B cell (primary cell): ENCODE measurements at regions of chr15 and their contacts with region 1.

Region 1: GRCh38 chr15:38683382-38684242 is 119.0 kb upstream of the RASGRP1 start:
- DNase-seq: peak; percentile 82
- ATAC-seq: peak; percentile 84
- H3K4me3 ChIP-seq: no peak overlapping the region
- H3K4me3 Mint-ChIP-seq: peak overlapping the region; percentile 50
- H3K27ac ChIP-seq: peak overlapping the region in 1 of 2 donors; percentile 75
- H3K27ac Mint-ChIP-seq: peak overlapping the region; percentile 64
- H3K4me1 ChIP-seq: peaks cover 20 to 24% of the 10 kb centered on the region in 2 donors
- H3K4me1 Mint-ChIP-seq: peaks cover 24% of the 10 kb centered on the region
- H3K27me3 ChIP-seq: no peaks in the 10 kb centered on the region
- H3K27me3 Mint-ChIP-seq: no peaks in the 10 kb centered on the region
- CTCF ChIP-seq: peak; percentile 93

Region 2: GRCh38 chr15:38453971-38454695 is 229.5 kb before region 1 on chr15 and contains the start of gene FAM98B:
- CTCF ChIA-PET with region 1: interaction called, 50 read pairs
- POLR2A ChIA-PET with region 1: interaction called, 3 read pairs
- intact Hi-C with region 1: no loop called
- DNase-seq: peak; percentile 91
- ATAC-seq: peak; percentile 86
- H3K4me3 ChIP-seq: peak within 1 kb of the TSS; percentile 69 to 94 (median 86)
- H3K4me3 Mint-ChIP-seq: peak within 1 kb of the TSS; percentile 99
- H3K27ac ChIP-seq: peak within 1 kb of the TSS; percentile 87 to 89
- H3K27ac Mint-ChIP-seq: peak within 1 kb of the TSS; percentile 97
- H3K4me1 ChIP-seq: peaks cover 9% of the 10 kb centered on the region in 2 donors
- H3K4me1 Mint-ChIP-seq: peaks cover 27% of the 10 kb centered on the region
- H3K27me3 ChIP-seq: no peaks in the 10 kb centered on the region
- H3K27me3 Mint-ChIP-seq: peaks cover 10% of the 10 kb centered on the region
- CTCF ChIP-seq: peak; percentile 12
- total RNA-seq, gene FAM98B: 16.6 and 21.5 TPM in 2 replicates

Region 3: DNA sequence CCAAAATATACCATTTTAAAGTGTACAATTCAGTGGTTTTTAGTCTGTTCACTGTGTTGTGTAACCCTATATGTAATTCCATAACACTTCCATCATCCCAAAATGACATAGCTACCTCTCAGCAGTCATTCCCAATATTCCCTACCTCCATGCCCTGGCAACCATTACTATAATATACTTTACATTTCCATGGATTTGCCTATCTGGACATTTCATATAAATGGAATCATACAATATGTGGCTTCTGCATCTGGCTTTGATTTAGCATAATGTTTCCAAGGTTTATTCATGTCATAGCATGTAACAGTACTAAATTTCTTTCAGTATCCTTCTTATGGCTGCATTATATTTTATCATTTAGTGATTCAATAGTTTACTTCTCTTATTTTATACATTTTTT is 204.3 kb before region 1 on chr15:
- CTCF ChIA-PET with region 1: interaction called, 145 read pairs
- POLR2A ChIA-PET with region 1: no interaction called
- intact Hi-C with region 1: loop called (anchors 1 kb)
- DNase-seq: no peak
- ATAC-seq: no peak
- H3K4me3 ChIP-seq: no peak overlapping the region
- H3K4me3 Mint-ChIP-seq: no peak overlapping the region
- H3K27ac ChIP-seq: no peak overlapping the region
- H3K27ac Mint-ChIP-seq: no peak overlapping the region
- H3K4me1 ChIP-seq: no peaks in the 10 kb centered on the region
- H3K4me1 Mint-ChIP-seq: peaks cover 9% of the 10 kb centered on the region
- H3K27me3 ChIP-seq: no peaks in the 10 kb centered on the region
- H3K27me3 Mint-ChIP-seq: no peaks in the 10 kb centered on the region
- CTCF ChIP-seq: no peak

Region 4: DNA sequence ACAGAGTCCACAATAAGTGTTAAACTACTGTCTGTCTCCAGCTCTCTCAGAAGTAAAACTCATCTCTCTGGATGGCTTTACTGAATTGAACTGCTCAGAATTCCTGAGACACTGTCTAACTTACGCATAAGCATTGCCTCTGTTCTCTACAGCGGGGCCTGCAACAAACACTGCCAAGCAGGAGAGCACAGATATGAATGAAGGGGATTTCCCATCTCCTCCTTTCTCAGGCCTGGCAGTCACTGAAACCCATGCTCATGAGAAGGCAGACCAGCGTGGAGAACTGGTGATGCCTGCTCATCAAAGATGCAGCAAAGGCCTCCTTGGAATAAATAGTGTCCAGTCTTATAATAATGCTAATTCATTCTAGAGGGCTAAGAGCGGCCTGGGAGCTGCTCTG is 129.3 kb before region 1 on chr15:
- CTCF ChIA-PET with region 1: interaction called, 546 read pairs
- POLR2A ChIA-PET with region 1: no interaction called
- intact Hi-C with region 1: no loop called
- DNase-seq: no peak
- ATAC-seq: no peak
- H3K4me3 ChIP-seq: no peak overlapping the region
- H3K4me3 Mint-ChIP-seq: no peak overlapping the region
- H3K27ac ChIP-seq: no peak overlapping the region
- H3K27ac Mint-ChIP-seq: no peak overlapping the region
- H3K4me1 ChIP-seq: peaks cover 35 to 40% of the 10 kb centered on the region in 2 donors
- H3K4me1 Mint-ChIP-seq: peaks cover 60% of the 10 kb centered on the region
- H3K27me3 ChIP-seq: no peaks in the 10 kb centered on the region
- H3K27me3 Mint-ChIP-seq: no peaks in the 10 kb centered on the region
- CTCF ChIP-seq: no peak

Region 5: GRCh38 chr15:38618242-38618955 is 65.2 kb before region 1 on chr15:
- CTCF ChIA-PET with region 1: interaction called, 10 read pairs
- POLR2A ChIA-PET with region 1: no interaction called
- intact Hi-C with region 1: no loop called
- DNase-seq: no peak
- ATAC-seq: no peak
- H3K4me3 ChIP-seq: no peak overlapping the region
- H3K4me3 Mint-ChIP-seq: no peak overlapping the region
- H3K27ac ChIP-seq: no peak overlapping the region
- H3K27ac Mint-ChIP-seq: no peak overlapping the region
- H3K4me1 ChIP-seq: peaks cover 12 to 18% of the 10 kb centered on the region in 2 donors
- H3K4me1 Mint-ChIP-seq: peaks cover 20% of the 10 kb centered on the region
- H3K27me3 ChIP-seq: no peaks in the 10 kb centered on the region
- H3K27me3 Mint-ChIP-seq: no peaks in the 10 kb centered on the region
- CTCF ChIP-seq: no peak

Region 6: GRCh38 chr15:38647683-38648082 is 35.9 kb before region 1 on chr15:
- CTCF ChIA-PET with region 1: interaction called, 73 read pairs
- POLR2A ChIA-PET with region 1: interaction called, 4 read pairs
- intact Hi-C with region 1: loop called (anchors 1 kb)
- DNase-seq: no peak
- ATAC-seq: no peak
- H3K4me3 ChIP-seq: no peak overlapping the region
- H3K4me3 Mint-ChIP-seq: no peak overlapping the region
- H3K27ac ChIP-seq: no peak overlapping the region
- H3K27ac Mint-ChIP-seq: no peak overlapping the region
- H3K4me1 ChIP-seq: peaks cover 39 to 40% of the 10 kb centered on the region in 2 donors
- H3K4me1 Mint-ChIP-seq: peaks cover 60% of the 10 kb centered on the region
- H3K27me3 ChIP-seq: no peaks in the 10 kb centered on the region
- H3K27me3 Mint-ChIP-seq: no peaks in the 10 kb centered on the region
- CTCF ChIP-seq: no peak

Region 7: DNA sequence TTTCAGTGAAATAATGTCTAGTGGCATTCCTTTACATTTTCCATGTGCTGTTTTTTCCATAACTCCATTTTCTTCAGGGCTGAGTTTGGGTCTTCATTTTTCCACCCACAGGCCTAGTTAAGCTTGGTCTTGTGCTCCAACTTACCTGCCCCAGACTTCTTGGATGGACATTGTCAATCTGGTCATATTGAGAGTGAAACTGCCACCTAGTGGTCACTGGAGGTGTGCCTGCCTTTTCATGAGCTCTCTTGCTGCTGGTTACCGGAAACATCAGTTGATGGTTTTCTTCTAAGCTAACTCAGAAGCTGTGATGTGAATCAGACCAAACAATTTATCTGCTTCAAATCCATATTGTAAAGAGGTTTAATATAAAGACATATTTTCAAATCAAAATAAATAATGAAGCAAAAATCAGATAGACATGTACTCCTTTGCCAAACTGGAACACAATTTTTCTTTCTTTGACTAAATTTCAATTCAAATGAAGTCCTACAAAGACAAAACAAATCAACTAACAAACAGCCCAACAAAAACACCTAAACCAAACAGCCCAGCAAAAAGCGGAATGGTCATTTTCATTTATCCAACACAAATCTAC is 16.1 kb after region 1 on chr15:
- CTCF ChIA-PET with region 1: interaction called, 124 read pairs
- POLR2A ChIA-PET with region 1: no interaction called
- intact Hi-C with region 1: no loop called
- DNase-seq: peak; percentile 77
- ATAC-seq: peak; percentile 78
- H3K4me3 ChIP-seq: no peak overlapping the region
- H3K4me3 Mint-ChIP-seq: no peak overlapping the region
- H3K27ac ChIP-seq: no peak overlapping the region
- H3K27ac Mint-ChIP-seq: no peak overlapping the region
- H3K4me1 ChIP-seq: no peaks in the 10 kb centered on the region
- H3K4me1 Mint-ChIP-seq: peaks cover 2% of the 10 kb centered on the region
- H3K27me3 ChIP-seq: no peaks in the 10 kb centered on the region
- H3K27me3 Mint-ChIP-seq: peaks cover 3% of the 10 kb centered on the region
- CTCF ChIP-seq: peak; percentile 94

Region 8: GRCh38 chr15:38853608-38854007 is 170.0 kb after region 1 on chr15:
- CTCF ChIA-PET with region 1: no interaction called
- POLR2A ChIA-PET with region 1: no interaction called
- intact Hi-C with region 1: no loop called
- DNase-seq: no peak
- ATAC-seq: no peak
- H3K4me3 ChIP-seq: no peak overlapping the region
- H3K4me3 Mint-ChIP-seq: no peak overlapping the region
- H3K27ac ChIP-seq: no peak overlapping the region
- H3K27ac Mint-ChIP-seq: no peak overlapping the region
- H3K4me1 ChIP-seq: no peaks in the 10 kb centered on the region
- H3K4me1 Mint-ChIP-seq: no peaks in the 10 kb centered on the region
- H3K27me3 ChIP-seq: no peaks in the 10 kb centered on the region
- H3K27me3 Mint-ChIP-seq: peaks cover 8% of the 10 kb centered on the region
- CTCF ChIP-seq: no peak